CD4-positive, alpha-beta memory T cell (primary cell): ENCODE measurements at regions of chr19 and their contacts with region 1.

Region 1: DNA sequence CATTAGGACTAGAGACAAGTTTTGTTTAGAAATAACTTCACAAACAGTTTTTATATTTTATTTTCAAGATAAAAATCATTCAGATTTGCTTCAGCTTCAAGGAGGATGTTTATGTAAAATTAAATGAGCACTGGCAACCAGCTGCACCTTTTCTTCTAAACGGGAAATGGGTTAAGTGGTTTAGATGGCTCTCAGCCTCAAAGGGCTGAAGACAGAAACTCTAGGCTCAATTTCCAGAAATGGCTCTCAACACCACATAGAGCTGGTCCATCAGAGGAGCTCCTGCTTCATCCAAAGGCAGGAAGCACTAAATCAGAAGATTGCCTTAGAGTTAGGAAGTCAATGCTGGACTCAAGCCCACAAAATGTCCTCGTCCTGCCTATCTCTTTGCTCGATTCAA is 74.7 kb downstream of the ZNF429 start:
- DNase-seq: no peak
- H3K4me3 ChIP-seq: no peak overlapping the region
- H3K4me3 Mint-ChIP-seq: peak overlapping the region in 3 of 8 donors; percentile 4 to 10 (median 5)
- H3K27ac ChIP-seq: no peak overlapping the region
- H3K27ac Mint-ChIP-seq: peak overlapping the region in 4 of 7 donors; percentile 15 to 75 (median 48)
- H3K4me1 ChIP-seq: peaks cover 14% of the 10 kb centered on the region
- H3K4me1 Mint-ChIP-seq: peaks cover 8 to 43% (median 10%) of the 10 kb centered on the region in 4 donors
- H3K27me3 ChIP-seq: no peaks in the 10 kb centered on the region
- H3K27me3 Mint-ChIP-seq: peaks cover 1 to 4% of the 10 kb centered on the region in 2 donors

Region 2: GRCh38 chr19:21604351-21604926 is 24.3 kb after region 1 on chr19:
- CTCF ChIA-PET with region 1: no interaction called
- POLR2A ChIA-PET with region 1: interaction called, 10 read pairs
- intact Hi-C with region 1: no loop called
- DNase-seq: peak in 3 of 5 donors; percentile 29 to 35 (median 29)
- H3K4me3 ChIP-seq: peak overlapping the region; percentile 45 to 62
- H3K4me3 Mint-ChIP-seq: peak overlapping the region; percentile 86 to 95 (median 90)
- H3K27ac ChIP-seq: peak overlapping the region; percentile 33
- H3K27ac Mint-ChIP-seq: peak overlapping the region; percentile 70 to 94 (median 93)
- H3K4me1 ChIP-seq: peaks cover 18% of the 10 kb centered on the region
- H3K4me1 Mint-ChIP-seq: peaks cover 10 to 25% (median 19%) of the 10 kb centered on the region in 4 donors
- H3K27me3 ChIP-seq: no peaks in the 10 kb centered on the region
- H3K27me3 Mint-ChIP-seq: no peaks in the 10 kb centered on the region